AG04450 (cell line): ENCODE measurements at regions of chr1 and their contacts with region 1.

Region 1: DNA sequence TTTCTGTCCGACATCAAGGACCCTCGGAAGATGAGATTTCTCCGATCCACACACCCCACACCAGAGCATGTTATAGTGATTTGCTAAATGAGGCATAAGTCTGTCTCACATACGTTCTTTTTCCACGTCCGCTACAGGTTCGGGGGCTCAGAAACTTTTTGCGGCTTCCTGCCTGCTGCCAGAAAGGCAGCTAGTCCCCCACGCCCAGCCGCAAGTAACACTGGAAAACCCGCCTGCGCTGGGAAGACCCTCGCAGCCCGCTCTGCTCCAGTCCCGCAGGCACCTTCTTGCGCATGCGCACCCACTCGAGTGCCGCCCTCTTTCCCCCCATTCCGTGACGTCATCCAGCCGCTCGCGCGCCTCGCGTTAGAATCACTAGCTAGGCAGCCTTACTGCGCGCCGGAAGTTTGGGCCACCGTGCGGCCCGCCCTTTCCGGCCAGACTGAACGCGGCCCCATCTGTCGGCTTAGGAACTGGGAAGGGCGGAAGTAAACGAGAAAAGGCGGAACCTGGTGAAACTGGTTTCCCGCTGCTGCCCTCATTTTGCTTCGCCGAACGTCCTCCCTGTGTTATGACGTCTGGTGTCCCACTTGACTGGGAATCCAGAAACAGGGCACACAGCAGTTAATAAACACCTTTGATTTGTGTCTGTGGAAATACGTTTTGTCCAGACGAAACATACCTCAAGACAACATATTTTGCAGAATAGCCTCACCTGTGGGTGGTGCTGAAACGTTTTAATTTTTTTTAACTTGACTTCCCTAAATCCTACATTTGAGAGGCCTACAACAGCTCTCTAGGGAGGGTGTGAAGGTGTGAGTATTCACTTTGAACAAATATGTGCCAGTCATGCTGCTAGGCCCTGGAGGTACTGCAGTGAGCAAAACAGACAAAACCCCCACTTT is at the start of gene C1orf74:
- DNase-seq: peak; percentile 95
- H3K4me3 ChIP-seq: peak within 1 kb of the TSS; percentile 86
- H3K27ac ChIP-seq: peak within 1 kb of the TSS; percentile 66
- H3K27me3 ChIP-seq: peaks cover 2% of the 10 kb centered on the region
- CTCF ChIP-seq: no peak
- polyA plus RNA-seq, gene C1orf74: 1.8 and 2.2 TPM in 2 replicates

Region 2: DNA sequence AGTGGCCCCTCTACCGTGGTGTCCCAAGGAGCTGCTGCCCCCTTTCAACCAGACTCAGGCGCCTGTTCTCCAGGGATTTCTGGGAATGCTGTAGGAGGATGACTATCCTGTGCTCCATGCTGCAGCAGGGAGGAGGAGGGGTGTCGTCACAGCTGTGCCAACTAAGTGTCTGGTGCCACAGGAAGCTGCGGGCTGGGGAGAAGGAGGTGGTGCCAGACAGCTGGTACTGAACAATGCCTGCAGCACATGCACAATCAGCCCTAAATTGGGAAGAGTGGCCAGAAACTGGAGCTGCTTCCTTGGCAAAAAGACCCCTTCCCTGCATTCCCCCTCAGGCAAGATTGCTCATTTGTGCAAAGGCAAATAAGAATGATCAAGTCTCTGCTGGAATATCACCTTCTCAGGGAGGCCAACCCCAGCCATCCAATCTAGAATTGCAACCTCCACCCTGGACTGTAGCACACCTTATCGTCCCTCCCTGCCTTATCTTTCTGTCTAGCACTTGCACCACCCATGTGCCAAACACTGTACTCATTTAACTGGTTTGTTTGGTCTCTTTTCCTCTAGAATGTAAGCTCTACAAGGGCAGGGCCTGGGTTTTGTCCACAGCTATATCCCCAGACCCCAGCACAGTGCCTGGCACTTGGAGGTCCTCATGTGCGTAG is 165.6 kb before region 1 on chr1:
- CTCF ChIA-PET with region 1: no interaction called
- POLR2A ChIA-PET with region 1: no interaction called
- DNase-seq: no peak
- H3K4me3 ChIP-seq: no peak overlapping the region
- H3K27ac ChIP-seq: no peak overlapping the region
- H3K27me3 ChIP-seq: no peaks in the 10 kb centered on the region
- CTCF ChIP-seq: no peak

Region 3: DNA sequence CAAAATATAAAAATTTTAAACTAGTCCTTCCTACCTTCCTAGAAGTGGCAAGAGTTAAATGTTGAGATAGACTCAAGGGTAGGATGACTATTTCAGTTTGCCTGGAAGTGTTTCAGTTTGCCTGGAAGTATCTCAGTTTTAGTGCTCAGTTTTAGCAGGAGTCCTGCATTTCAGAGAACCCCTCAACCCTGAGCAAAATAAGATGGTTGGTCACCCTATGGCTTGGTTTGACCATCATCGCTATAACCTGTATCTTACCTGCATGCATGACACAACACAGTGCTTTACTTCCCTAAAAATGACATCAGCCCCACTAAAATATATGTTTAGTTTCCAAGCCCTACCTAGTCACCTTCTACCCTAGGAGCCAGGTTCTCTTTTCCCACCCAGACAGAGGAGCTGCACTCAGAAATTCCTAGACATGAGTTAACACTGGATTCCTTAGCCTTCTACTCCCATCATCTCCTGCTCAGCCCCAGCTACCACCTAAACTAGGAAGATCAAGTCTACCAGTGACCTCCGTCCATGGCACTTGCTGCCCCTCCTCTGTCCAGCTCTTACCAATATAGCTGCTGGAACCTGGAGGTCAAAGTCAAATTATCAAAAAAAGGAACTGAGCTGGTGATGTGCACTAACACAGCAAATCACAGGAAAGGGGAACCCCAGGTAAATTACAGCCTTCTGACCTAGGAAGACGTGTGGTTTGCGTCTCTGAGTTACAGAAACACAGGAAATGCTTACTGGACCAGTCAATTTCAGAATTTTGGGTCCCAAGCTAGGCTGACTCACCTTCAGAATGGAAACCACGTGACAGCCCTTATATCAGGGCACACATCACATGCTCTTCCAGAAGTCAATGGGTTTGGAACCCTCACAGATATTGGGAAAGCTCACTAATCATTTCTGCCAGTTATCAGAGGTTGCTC is 111.5 kb before region 1 on chr1:
- CTCF ChIA-PET with region 1: interaction called, 11 read pairs
- POLR2A ChIA-PET with region 1: no interaction called
- DNase-seq: no peak
- H3K4me3 ChIP-seq: no peak overlapping the region
- H3K27ac ChIP-seq: no peak overlapping the region
- H3K27me3 ChIP-seq: no peaks in the 10 kb centered on the region
- CTCF ChIP-seq: no peak

Region 4: DNA sequence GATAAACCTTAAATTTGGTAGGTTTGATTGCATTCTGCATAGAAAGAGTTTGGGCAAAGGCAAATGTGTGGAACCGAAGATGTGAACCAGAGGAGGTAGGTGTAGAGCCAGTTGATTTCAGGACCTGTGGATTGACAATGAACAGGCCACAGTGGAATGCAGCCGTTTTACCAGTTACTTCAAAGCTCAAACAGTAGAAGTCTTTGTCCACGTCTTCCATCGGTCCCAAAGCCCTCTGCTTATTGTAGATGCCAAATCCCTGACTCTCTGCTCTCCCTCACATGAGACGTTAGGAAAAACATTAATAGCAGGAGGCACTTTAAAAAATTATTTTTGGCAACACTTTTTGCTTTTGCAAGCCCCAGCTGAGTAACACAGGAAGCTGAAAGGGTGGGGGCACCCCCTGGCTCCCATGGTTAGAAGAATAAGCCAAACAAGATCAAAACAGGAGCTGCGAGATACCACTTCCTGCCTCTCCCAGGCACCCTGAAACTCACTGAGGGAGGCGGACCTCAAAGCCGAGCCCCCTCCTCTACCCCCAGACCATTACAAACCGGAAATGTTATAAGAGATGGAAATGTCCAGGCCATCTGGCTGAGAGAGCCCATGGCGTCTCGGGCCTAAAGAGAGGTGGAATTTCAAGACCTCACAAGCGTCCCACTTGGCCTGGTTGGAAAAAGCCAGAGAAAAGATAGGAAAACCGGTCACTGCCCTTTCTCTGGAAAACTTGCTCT is 15.2 kb before region 1 on chr1:
- CTCF ChIA-PET with region 1: interaction called, 3 read pairs
- POLR2A ChIA-PET with region 1: interaction called, 10 read pairs
- DNase-seq: peak; percentile 66
- H3K4me3 ChIP-seq: no peak overlapping the region
- H3K27ac ChIP-seq: peak overlapping the region; percentile 94
- H3K27me3 ChIP-seq: no peaks in the 10 kb centered on the region
- CTCF ChIP-seq: no peak